MCF 10A (cell line): ENCODE measurements at regions of chr19 and their contacts with region 1.

Region 1: DNA sequence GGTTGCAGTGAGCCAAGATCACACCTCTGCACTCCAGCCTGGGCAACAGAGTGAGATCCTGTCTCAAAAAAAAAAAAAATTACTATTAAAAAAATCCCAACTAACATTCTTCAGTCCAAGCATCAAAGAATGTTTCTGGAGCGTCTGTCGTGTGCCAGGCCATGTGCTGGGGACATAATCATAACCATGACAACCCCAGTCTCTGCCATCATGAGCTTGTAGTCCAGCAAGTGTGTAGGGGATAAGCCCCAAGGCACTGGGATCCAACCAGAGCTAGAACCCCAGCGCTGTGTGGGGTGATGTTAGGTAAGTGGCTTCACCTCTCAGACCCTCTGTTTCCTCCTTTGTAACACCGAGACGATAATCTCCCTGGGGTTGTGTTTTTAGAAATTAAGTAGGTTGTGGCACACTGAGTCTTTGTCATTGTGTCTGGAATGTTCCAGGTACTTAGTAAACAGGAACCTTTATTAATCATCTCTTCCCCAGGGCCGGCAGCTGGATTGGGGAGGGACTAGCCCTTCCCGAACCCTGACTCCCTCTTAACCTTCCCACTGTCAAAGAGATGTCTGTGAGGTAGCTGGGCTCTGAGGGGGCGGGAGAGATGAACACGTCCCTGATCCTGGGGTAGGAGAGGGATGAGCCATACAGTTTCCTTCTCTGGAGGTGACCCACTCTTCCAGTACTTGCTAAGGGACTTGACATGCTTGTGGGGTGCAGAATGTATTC is 5.2 kb downstream of the ITPKC start:
- DNase-seq: peak; percentile 57
- H3K4me3 Mint-ChIP-seq: peak overlapping the region; percentile 92
- H3K27ac Mint-ChIP-seq: peak overlapping the region; percentile 95
- H3K4me1 Mint-ChIP-seq: peaks cover 33% of the 10 kb centered on the region
- H3K27me3 Mint-ChIP-seq: no peaks in the 10 kb centered on the region
- CTCF ChIP-seq: no peak

Region 2: DNA sequence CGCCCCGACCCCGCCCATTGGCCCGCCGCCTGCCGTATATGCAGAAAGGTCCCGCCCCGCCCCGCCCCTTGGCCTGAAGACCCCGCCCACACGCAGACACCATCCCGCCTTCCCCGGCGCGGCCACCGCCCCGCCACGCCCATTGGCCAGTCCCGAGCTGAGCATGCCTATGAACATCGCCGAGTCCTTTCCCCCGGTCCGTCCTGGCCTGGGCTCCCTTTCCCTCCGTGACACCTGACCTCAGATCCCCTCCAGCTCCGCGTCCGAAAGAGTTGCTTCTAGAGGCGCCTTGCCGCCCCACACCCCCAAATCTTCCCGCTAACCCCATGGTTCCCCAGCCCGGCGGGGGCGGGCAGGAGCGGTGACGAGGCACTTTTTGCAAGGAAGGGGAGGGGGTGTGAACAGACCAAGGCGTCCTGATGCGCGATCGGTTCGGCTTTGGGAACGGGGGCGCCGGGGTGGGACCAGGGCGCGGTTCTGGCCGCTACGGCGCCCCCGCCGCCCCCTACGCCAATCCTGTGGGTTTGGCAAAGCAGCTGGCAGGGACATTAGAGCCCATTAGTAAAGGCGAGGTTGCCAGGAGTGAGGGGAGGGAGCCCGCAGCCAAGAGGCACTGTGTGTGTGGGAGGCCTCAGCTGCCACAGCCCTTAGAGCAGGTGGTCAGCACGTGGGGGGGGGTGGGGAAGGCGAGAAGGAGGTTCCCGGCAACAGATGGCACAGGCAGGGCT is 31.2 kb before region 1 on chr19:
- CTCF ChIA-PET with region 1: interaction called, 3 read pairs
- POLR2A ChIA-PET with region 1: interaction called, 21 read pairs
- intact Hi-C with region 1: no loop called
- DNase-seq: peak; percentile 94
- H3K4me3 Mint-ChIP-seq: no peak overlapping the region
- H3K27ac Mint-ChIP-seq: peak overlapping the region; percentile 90
- H3K4me1 Mint-ChIP-seq: peaks cover 7% of the 10 kb centered on the region
- H3K27me3 Mint-ChIP-seq: no peaks in the 10 kb centered on the region
- CTCF ChIP-seq: no peak

Region 3: DNA sequence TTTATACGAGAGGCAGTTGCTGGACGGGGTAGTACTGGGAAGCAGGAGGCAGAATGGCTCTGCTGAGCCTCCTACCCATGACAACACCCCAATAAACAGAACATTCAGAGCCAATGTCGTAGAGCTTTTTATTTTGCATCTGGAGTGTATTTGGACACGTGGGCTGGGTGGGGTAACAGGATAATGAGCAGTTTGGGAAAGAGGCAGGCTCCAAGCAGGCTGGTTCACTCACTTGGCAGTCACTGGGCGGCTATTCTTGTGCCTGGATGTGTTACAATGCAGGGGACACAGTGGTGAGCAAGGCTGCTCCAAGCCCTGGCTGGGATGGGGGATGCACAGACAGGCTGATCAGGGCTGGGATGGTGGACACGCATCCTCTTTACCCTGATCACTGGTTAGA is 18.6 kb after region 1 on chr19:
- CTCF ChIA-PET with region 1: interaction called, 3 read pairs
- POLR2A ChIA-PET with region 1: interaction called, 27 read pairs
- intact Hi-C with region 1: no loop called
- DNase-seq: no peak
- H3K4me3 Mint-ChIP-seq: no peak overlapping the region
- H3K27ac Mint-ChIP-seq: peak overlapping the region; percentile 70
- H3K4me1 Mint-ChIP-seq: peaks cover under 1% of the 10 kb centered on the region
- H3K27me3 Mint-ChIP-seq: no peaks in the 10 kb centered on the region
- CTCF ChIP-seq: no peak